Heart left ventricle (tissue), 16 donors: ENCODE measurements at regions of chr11 and their contacts with region 1.

Region 1: DNA sequence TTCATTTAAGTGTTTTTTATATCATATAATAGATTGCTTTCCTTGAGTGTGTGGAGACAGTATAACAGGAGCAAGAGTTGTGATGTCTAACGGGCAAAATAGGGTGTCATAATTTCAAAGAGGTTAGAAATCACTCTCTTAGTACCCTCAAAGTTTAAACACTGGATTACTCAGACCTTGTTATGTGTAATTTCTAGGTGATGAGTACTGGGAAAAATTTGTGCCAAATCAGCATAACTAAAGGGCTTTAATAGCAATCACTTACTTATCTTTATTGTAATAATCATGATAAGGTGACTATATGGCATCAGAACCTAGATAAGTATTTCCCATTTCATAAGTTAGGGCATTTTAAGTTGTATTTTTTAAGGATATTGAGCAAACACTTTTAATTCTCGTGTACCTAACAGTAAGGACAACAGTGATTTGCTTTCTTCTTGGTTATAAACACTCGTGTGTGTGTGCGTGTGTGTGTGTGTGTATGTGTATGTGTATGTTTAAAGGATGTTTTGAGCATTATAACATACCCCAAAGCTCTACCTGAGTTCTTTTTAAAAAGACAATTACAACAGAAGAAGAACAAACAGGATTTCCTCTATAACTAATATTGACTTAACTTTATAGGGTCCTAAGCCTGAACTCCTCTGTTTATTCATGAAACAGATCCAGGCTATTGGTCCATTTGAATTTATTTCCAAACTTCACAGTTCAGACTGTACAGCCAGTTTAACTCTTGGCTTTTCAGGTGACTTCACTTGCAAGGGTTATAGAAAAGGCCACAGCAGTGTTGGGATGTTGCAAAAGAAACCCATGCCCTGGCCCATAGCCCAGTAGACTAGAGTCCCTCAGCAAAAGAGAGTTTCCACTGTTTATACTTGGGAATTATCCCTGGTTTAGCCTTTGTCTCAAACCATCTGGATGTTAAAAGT is 23.7 kb upstream of the PDE3B start:
- DNase-seq: no peak
- ATAC-seq: peak in 1 of 4 donors; percentile 44
- H3K4me3 ChIP-seq: no peak overlapping the region
- H3K27ac ChIP-seq: peak overlapping the region in 1 of 12 donors; percentile 64
- H3K4me1 ChIP-seq: peaks cover 0 to 12% (median 0%) of the 10 kb centered on the region in 12 donors
- H3K27me3 ChIP-seq: no peaks in the 10 kb centered on the region
- CTCF ChIP-seq: no peak
- POLR2A ChIP-seq: no peak

Region 2: GRCh38 chr11:14554959-14555358 is 64.9 kb before region 1 on chr11:
- intact Hi-C with region 1: loop called in 1 of 10 experiments (anchors 5 kb)
- DNase-seq: peak in 1 of 5 donors; percentile 22
- ATAC-seq: peak; percentile 64 to 82 (median 77)
- H3K4me3 ChIP-seq: no peak overlapping the region
- H3K27ac ChIP-seq: peak overlapping the region in 6 of 12 donors; percentile 15 to 75 (median 42)
- H3K4me1 ChIP-seq: peaks cover 0 to 27% (median 7%) of the 10 kb centered on the region in 12 donors
- H3K27me3 ChIP-seq: no peaks in the 10 kb centered on the region
- CTCF ChIP-seq: no peak
- POLR2A ChIP-seq: no peak